ENCODE measurements at regions of chr19 and their contacts with region 1.

Region 1: DNA sequence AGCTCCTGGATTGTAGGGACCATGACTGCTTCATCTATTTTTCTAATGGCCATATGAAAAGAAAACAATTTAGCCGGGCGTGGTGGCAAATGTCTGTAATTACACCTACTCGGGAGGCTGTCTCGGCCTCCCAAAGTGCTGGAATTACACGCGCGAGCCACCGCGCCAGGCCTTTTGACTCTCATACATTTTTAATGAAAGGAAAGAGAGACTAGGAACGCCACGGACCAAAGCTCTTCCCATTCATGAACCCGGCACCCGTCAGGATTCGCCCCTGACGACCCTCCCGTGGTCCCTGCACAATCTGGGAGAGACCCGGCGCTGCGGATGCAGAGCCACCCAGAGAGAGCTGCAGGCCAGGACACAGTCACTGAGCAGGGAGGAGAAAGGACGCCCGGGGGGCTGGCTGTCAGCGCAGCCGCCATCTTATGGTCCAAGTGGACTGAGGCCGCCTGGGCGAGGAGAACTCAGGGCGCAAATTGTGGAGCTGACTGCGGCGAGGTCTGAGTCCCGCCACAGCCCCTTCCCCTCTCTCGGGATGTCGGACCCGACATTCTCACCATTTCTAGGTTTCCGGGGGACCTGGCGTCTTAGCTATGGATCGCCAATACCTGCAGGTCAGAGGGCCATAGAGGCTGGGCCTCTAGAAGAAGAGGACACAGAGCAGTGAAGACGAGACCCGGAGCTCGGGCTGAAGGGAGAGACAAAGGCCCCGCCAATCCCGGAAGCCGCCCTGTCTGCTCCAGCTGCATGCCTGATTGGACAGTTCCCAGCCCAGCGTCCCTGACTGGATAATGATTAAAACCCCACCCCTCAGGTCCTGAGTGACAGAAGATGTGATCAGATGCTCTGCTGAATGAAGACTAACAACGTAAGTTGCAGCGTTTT is at the start of gene ZNF681:
- DNase-seq: peak; percentile 76
- H3K4me3 Mint-ChIP-seq: peak within 1 kb of the TSS; percentile 90
- H3K27ac Mint-ChIP-seq: peak within 1 kb of the TSS; percentile 83
- H3K4me1 Mint-ChIP-seq: peaks cover 13% of the 10 kb centered on the region
- H3K27me3 Mint-ChIP-seq: no peaks in the 10 kb centered on the region
- total RNA-seq, gene ZNF681: 3.0 and 3.3 TPM in 2 replicates

Region 2: GRCh38 chr19:23673132-23673531 is 85.3 kb before region 1 on chr19:
- intact Hi-C with region 1: no loop called
- DNase-seq: no peak
- H3K4me3 Mint-ChIP-seq: no peak overlapping the region
- H3K27ac Mint-ChIP-seq: no peak overlapping the region
- H3K4me1 Mint-ChIP-seq: no peaks in the 10 kb centered on the region
- H3K27me3 Mint-ChIP-seq: no peaks in the 10 kb centered on the region

Region 3: DNA sequence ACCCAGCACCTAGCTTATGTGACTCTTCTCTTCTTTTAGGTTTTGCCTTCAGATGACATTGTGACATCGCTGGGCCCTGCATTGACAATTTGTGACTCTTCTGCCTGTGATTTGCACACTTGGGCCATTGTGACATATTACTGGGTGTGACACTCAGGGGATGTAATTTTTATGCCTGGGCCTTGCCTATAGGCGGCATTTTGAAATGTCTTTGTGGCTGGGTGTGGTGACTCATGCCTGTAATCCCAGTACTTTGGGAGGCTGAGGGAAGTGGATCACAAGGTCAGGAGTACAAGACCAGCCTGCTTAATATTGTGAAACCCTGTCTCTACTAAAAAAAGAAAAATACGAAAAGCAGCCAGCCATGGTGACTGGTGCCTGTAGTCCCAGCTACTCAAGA is 28.7 kb after region 1 on chr19:
- intact Hi-C with region 1: no loop called
- DNase-seq: no peak
- H3K4me3 Mint-ChIP-seq: no peak overlapping the region
- H3K27ac Mint-ChIP-seq: no peak overlapping the region
- H3K4me1 Mint-ChIP-seq: no peaks in the 10 kb centered on the region
- H3K27me3 Mint-ChIP-seq: no peaks in the 10 kb centered on the region

Region 4: GRCh38 chr19:23914402-23915301 is 156.2 kb after region 1 on chr19 and contains the start of gene ZNF726:
- intact Hi-C with region 1: loop called (anchors 2 kb)
- DNase-seq: peak; percentile 82
- H3K4me3 Mint-ChIP-seq: peak within 1 kb of the TSS; percentile 95
- H3K27ac Mint-ChIP-seq: peak within 1 kb of the TSS; percentile 95
- H3K4me1 Mint-ChIP-seq: no peaks in the 10 kb centered on the region
- H3K27me3 Mint-ChIP-seq: no peaks in the 10 kb centered on the region
- total RNA-seq, gene ZNF726: 10.7 and 12.6 TPM in 2 replicates